Mucosa of descending colon (tissue), 3 donors: ENCODE measurements at regions of chr17 and their contacts with region 1.

Region 1: GRCh38 chr17:78374631-78375274 is 3.7 kb upstream of the PGS1 start:
- DNase-seq: no peak
- ATAC-seq: no peak
- H3K4me3 ChIP-seq: no peak overlapping the region
- H3K4me1 ChIP-seq: peaks cover 13% of the 10 kb centered on the region
- CTCF ChIP-seq: no peak

Region 2: GRCh38 chr17:78284146-78284545 is 90.6 kb before region 1 on chr17:
- intact Hi-C with region 1: loop called in 1 of 2 experiments (anchors 5 kb)
- DNase-seq: no peak
- ATAC-seq: peak; percentile 42
- H3K4me3 ChIP-seq: no peak overlapping the region
- H3K4me1 ChIP-seq: no peaks in the 10 kb centered on the region
- CTCF ChIP-seq: no peak

Region 3: DNA sequence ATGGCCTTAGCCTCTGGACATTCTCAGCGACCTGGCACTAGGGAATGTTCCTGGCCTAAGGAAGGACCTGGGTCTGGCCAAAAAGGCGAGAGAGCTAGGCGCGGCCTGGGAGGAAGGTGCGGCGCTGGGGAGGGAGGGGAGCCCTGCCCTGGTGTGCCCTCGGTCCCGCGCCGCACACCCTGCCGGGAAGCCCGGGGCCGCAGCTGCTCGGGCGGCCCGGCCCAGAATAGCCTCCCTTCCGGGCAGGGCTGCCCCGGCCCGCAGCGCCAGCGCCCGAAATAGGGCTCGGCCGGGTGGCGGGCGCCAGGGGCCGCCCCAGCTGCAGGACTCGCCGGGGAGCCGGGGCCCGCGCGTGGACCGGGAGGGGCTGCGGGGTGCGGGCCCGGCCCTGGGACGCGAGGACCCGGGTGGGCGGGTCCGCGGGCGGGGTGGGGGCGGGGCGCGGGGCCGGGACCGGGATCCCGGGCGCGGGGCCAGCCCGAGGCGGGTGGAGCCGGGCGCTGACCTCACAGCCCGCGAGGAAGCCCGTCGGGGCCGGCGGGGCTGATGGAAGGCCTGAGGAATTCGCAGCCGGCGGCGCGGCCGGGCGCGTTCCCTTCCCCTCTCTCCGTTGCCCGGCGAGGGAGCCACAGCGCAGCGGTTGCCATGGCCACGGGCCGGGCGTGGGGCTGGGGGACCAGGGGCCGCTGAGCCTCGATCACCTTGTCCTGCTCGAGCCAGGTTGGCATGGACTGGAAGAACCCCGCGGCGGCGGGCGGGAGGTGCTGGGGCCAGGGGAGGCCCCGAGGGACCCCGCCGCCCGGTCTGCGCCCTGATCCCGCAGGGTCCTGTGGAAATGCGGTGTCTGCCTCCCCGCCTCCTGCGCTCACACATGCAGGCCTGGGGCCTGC is 32.9 kb before region 1 on chr17:
- intact Hi-C with region 1: no loop called
- DNase-seq: peak; percentile 78 to 85 (median 85)
- ATAC-seq: peak; percentile 68
- H3K4me3 ChIP-seq: no peak overlapping the region
- H3K4me1 ChIP-seq: peaks cover 23% of the 10 kb centered on the region
- CTCF ChIP-seq: no peak